GM10248 (cell line): ENCODE measurements at regions of chr10 and their contacts with region 1.

Region 1: GRCh38 chr10:96642973-96643372 is 56.2 kb upstream of the TM9SF3 start:
- DNase-seq: peak; percentile 58
- CTCF ChIP-seq: peak; percentile 74

Region 2: GRCh38 chr10:96448021-96448457 is 194.9 kb before region 1 on chr10:
- CTCF ChIA-PET with region 1: no interaction called
- POLR2A ChIA-PET with region 1: no interaction called
- DNase-seq: peak; percentile 58
- CTCF ChIP-seq: no peak

Region 3: DNA sequence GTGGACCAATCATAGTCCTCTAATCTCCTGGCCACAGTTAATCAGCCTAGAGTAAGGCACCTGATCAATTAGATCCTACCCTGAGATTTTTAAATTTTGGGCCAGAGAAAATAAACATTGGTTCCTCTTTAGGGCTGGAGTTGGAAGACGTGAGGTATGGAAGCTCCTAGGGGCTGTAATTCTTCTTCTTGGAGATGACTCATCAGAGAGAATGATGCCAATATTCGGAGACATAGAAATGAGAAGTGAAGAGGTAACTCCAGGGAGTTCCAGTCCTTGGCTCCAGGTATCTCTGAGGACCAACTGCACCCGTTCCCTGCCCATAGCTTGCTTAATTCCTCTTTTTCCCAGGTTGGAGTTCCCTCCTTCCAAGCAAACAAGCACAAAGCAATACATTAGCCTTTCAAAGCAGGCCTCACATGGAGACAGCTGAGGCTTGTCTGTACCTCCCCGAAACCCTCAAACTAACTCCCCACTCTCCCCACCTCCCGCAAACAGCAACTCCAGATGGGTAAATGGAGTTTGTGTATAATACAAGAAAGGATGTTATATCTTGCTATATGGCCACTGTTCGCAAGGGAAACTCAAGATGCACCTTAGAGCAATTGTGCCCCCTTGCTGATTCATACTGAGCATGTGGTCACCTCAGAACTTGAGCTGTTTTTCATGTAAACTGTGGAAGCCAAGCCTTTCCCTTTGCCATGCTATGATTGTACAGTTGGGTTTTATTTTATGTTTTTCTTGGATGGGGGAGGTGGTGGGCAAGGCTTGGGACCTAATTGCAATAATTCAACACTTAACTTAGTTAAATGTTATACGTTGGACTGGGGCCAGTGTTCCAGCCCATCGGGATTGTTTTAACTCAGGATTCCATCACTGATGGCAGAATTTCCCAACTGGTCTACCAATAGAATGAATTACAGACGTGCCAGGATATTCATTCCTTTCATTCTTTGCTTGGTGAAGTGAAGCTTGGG is 48.1 kb after region 1 on chr10:
- CTCF ChIA-PET with region 1: interaction called, 14 read pairs
- POLR2A ChIA-PET with region 1: no interaction called
- DNase-seq: no peak
- CTCF ChIP-seq: no peak

Region 4: DNA sequence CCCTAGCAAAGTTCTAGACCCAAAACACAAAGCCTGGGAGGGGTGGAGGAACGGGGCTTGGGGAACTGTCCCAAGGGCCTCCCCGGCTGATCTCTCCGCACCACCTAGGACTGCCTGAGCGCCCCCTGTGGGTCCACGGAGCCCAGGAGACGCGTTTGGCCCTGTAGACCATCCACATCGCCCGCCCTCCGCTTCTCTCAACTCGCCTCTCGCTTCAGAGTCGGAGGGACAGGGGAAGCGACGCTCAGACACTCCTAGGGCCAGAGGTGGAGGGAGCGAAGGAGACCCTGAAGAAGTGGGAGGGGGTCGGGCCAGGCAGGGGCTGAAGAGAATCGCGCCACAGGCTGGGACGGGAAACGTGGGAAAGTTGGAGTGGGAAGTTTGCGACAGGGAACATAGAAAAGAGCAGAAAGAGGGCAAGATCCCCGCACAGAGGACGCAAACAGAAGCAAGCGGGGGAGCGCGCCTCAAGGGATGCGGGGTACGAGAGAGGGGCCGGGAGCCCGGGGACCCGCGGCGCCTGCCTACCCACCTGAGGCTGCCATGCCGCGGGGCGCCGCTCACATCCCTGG is 77.0 kb after region 1 on chr10:
- CTCF ChIA-PET with region 1: interaction called, 39 read pairs
- POLR2A ChIA-PET with region 1: no interaction called
- DNase-seq: peak; percentile 80
- CTCF ChIP-seq: peak; percentile 96

Region 5: GRCh38 chr10:96740579-96741281 is 97.8 kb after region 1 on chr10:
- CTCF ChIA-PET with region 1: interaction called, 10 read pairs
- POLR2A ChIA-PET with region 1: no interaction called
- DNase-seq: no peak
- CTCF ChIP-seq: no peak

Region 6: DNA sequence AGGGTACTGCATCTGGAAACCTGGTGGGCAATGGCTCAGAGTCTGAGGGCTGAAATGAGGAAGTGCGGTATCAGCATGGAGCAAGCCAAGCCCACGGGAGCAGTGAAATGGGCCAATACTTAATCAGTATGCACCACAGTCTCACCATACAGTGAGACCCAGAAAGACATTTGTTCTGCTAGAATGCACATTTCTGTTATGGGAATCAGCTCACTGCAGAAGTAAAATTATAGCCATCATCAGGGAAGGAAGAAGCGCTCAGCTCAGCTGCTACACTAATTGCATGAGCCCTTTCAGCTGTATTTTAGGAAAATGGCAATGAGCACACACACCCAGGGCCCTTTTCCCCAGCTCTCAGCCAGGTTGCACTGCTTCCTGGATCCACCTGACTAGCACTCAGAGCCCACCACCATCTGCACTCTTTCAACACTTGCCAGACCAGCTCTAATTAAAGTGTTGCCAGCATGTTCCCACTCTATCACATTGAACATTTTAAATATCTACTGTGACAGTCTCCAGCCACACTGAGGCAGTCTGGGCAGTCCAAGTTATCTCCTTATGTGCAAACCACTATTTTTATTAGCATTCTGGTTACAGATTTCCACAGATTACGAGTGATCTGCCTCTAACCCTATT is 121.6 kb after region 1 on chr10:
- CTCF ChIA-PET with region 1: interaction called, 16 read pairs
- POLR2A ChIA-PET with region 1: no interaction called
- DNase-seq: peak; percentile 32
- CTCF ChIP-seq: no peak

Region 7: DNA sequence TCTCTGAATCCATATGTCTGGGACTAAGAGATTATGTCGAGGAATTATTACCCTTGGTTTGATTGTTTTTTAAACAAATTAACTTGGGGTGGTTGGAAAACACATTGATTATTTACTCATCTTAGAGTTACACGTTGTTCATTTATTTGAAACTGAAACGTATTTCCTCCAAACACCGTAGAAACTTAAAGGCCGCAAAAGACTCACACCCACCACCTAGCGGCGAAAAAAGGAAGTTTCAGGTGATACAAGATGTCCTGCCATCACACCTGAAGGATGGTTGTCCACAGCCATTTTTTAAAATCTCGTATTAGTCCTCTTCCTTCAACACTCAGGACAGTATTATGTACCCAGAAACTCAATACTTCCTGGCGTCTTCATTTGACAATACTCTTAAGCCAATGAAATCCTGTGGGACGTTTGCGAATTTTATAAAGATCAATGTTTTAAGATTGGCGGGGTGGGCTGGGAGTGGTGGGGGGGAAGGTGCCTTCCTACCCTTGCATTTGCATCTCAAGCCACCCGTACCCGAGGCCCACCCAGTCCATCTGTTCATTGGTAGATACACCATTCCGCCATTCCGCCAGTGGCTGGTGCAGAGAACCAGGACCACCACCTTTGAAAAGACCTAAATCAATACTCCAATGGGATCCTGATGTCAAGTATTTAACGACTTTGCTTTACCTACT is 187.7 kb after region 1 on chr10:
- CTCF ChIA-PET with region 1: interaction called, 29 read pairs
- POLR2A ChIA-PET with region 1: no interaction called
- DNase-seq: peak; percentile 68
- CTCF ChIP-seq: peak; percentile 82